ENCODE measurements at regions of chr1 and their contacts with region 1.

Region 1: GRCh38 chr1:205523891-205524793 is 19.7 kb downstream of the CDK18 start:
- DNase-seq: peak; percentile 52
- H3K4me3 ChIP-seq: no peak overlapping the region
- H3K27ac ChIP-seq: no peak overlapping the region
- H3K4me1 ChIP-seq: no peaks in the 10 kb centered on the region
- H3K27me3 ChIP-seq: no peaks in the 10 kb centered on the region
- CTCF ChIP-seq: peak; percentile 78 to 83

Region 2: GRCh38 chr1:205335643-205336091 is 188.5 kb before region 1 on chr1:
- CTCF ChIA-PET with region 1: interaction called, 5 read pairs
- dilution Hi-C with region 1: no loop called
- in situ Hi-C with region 1: no loop called
- intact Hi-C with region 1: loop called (anchors 1 kb)
- DNase-seq: peak; percentile 66
- H3K4me3 ChIP-seq: no peak overlapping the region
- H3K27ac ChIP-seq: no peak overlapping the region
- H3K4me1 ChIP-seq: peaks cover under 1% of the 10 kb centered on the region
- H3K27me3 ChIP-seq: no peaks in the 10 kb centered on the region
- CTCF ChIP-seq: peak; percentile 96 to 99

Region 3: DNA sequence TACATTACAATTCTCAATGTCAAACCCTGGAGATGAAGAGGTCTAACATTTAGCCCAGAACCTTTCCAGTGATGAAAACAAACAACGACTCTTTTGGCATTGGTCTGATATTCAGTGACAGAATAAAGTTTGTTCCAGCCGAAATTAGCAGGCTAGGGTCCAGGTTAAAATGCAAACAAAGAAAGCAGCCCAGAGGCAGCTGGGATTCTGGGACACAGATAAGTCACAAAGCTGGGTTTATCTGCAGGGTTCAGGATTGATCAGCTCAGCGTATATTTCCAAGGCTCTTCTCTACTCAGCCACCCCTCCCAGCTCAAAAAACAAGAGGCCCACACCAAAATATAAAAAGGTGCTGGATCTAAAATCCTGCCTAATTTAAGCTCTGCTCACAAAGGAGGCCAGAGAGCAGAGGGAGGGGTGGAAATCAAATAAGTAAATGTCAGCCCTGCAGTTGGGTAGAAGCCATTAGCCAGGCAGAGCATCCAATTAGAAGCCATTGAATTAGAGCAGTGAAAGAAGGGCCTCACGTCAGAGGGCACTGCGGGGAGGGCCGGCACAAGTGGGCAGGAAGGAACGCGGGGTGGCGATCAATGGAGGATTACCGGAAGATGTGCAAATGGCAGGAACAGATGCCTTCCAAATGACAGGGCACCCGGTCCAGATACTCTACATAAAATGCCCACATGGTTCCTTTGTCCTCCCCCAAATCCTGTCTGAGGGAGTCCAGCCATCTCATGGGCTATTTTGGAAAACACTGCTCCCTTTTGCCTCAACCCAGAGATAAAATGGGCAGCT is 164.2 kb before region 1 on chr1:
- CTCF ChIA-PET with region 1: no interaction called
- dilution Hi-C with region 1: loop called (anchors 5 kb)
- in situ Hi-C with region 1: no loop called
- intact Hi-C with region 1: no loop called
- DNase-seq: no peak
- H3K4me3 ChIP-seq: no peak overlapping the region
- H3K27ac ChIP-seq: no peak overlapping the region
- H3K4me1 ChIP-seq: peaks cover 7% of the 10 kb centered on the region
- H3K27me3 ChIP-seq: no peaks in the 10 kb centered on the region
- CTCF ChIP-seq: no peak

Region 4: GRCh38 chr1:205375835-205376545 is 148.2 kb before region 1 on chr1:
- CTCF ChIA-PET with region 1: no interaction called
- dilution Hi-C with region 1: no loop called
- in situ Hi-C with region 1: no loop called
- intact Hi-C with region 1: no loop called
- DNase-seq: peak; percentile 62
- H3K4me3 ChIP-seq: no peak overlapping the region
- H3K27ac ChIP-seq: no peak overlapping the region
- H3K4me1 ChIP-seq: peaks cover 32% of the 10 kb centered on the region
- H3K27me3 ChIP-seq: no peaks in the 10 kb centered on the region
- CTCF ChIP-seq: peak in 1 of 2 donors; percentile 5

Region 5: GRCh38 chr1:205430696-205431305 is 93.3 kb before region 1 on chr1:
- CTCF ChIA-PET with region 1: no interaction called
- dilution Hi-C with region 1: loop called (anchors 5 kb)
- in situ Hi-C with region 1: no loop called
- intact Hi-C with region 1: no loop called
- DNase-seq: no peak
- H3K4me3 ChIP-seq: peak overlapping the region; percentile 26 to 49 (median 47)
- H3K27ac ChIP-seq: no peak overlapping the region
- H3K4me1 ChIP-seq: peaks cover 8% of the 10 kb centered on the region
- H3K27me3 ChIP-seq: peaks cover 3% of the 10 kb centered on the region
- CTCF ChIP-seq: peak; percentile 92 to 93

Region 6: DNA sequence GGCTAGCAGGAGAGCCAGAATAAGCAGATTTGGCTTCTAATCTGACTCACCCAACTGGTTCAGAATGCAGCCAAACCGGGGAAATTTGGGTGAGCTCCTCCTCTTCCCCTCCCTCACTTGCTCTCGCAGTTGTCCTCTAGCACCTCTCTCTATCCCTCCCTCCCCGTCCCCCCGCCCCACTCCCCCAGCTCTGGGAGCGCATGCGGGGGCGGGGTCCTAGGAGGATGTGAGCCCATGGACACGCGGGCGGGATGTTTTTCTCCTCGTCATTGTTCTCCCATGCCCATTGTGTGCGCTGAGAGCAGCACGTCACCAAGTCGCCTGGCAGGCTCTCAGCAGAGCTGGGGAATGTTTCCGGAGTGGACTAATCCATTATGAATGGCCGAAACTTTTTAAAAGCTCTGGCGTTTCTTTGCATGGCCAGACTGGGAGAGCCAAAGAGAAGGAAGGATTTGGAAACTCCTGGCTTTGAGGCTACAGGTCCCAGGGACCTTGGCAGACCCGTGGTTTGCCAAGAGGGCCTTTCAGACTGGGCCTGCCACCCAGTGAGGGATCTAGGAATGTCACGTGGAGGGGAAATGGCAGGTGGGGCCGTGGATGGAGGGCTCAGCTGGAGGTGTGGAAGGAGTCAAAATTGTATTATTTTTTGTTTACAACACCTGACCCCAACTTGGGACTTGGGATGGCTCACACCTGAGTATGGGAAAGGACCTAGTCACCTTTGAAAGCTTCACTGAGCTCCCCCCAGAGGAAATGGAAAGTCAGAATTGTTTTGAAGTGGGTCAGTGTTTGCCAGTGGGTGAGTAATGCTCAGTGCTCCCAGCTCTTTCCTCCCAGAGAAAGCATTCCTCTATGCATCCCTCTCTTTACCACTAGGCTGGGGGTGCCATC is 19.5 kb after region 1 on chr1:
- CTCF ChIA-PET with region 1: interaction called, 18 read pairs
- dilution Hi-C with region 1: no loop called
- in situ Hi-C with region 1: no loop called
- intact Hi-C with region 1: no loop called
- DNase-seq: peak; percentile 91
- H3K4me3 ChIP-seq: peak overlapping the region in 1 of 3 experiments; percentile 19
- H3K27ac ChIP-seq: peak overlapping the region; percentile 60
- H3K4me1 ChIP-seq: peaks cover 13% of the 10 kb centered on the region
- H3K27me3 ChIP-seq: no peaks in the 10 kb centered on the region
- CTCF ChIP-seq: no peak

Region 7: GRCh38 chr1:205620269-205620668 is 96.1 kb after region 1 on chr1:
- CTCF ChIA-PET with region 1: no interaction called
- dilution Hi-C with region 1: loop called (anchors 5 kb)
- in situ Hi-C with region 1: no loop called
- intact Hi-C with region 1: no loop called
- DNase-seq: no peak
- H3K4me3 ChIP-seq: no peak overlapping the region
- H3K27ac ChIP-seq: no peak overlapping the region
- H3K4me1 ChIP-seq: peaks cover 12% of the 10 kb centered on the region
- H3K27me3 ChIP-seq: no peaks in the 10 kb centered on the region
- CTCF ChIP-seq: no peak